ENCODE measurements at regions of chr9 and their contacts with region 1.

Region 1: DNA sequence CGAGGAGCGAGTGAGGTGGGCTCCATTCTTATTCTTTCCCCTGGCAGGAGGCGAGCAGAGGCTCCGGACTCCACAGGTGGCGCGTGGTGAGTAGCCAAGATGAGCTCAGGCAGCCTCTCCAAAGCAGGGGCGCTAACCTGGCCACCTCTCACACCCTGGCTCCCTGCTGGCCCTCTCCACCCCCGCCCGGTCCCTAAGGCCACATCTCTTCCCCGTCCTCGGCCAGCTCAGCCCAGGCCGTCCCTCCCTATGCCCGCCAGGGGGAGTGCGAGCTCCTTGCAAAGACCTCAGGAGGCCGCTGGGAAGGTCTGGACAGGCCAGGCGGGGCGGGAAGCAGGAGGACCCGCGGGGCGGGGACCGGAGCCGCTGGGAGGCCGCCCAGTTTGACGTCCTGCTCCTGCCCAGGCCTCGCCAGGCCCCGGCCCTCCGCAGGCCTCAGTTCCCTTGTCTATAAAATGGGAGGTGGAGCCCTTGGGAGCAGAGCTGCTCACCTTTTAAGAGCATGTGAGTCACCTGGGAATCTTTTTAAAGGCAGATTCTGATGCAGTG is 46.3 kb upstream of the GGTA1 start:
- DNase-seq: peak; percentile 97
- H3K4me3 Mint-ChIP-seq: peak overlapping the region; percentile 33
- H3K27ac Mint-ChIP-seq: peak overlapping the region; percentile 19
- H3K4me1 Mint-ChIP-seq: no peaks in the 10 kb centered on the region
- H3K27me3 Mint-ChIP-seq: no peaks in the 10 kb centered on the region
- CTCF ChIP-seq: peak; percentile 96

Region 2: DNA sequence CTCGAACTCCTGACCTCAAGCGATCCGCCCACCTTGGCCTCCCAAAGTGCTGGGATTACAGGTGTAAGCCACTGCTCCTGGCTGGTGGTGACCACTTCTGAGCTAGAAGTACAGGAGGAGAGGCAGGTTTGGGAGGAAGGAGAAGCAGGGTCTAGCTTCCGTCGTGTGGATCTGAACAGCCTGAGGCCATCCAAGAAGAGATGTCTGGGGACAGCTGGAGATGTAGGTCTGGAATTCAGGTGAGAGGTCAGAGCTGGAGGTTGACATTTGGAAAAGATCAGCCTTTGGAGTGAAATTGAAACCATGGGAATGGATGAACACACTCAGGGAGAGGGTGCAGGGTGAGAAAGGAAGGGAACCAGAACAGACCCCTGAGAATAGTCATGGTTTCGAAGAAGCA is 13.1 kb before region 1 on chr9:
- CTCF ChIA-PET with region 1: interaction called, 32 read pairs
- POLR2A ChIA-PET with region 1: no interaction called
- intact Hi-C with region 1: no loop called
- DNase-seq: no peak
- H3K4me3 Mint-ChIP-seq: no peak overlapping the region
- H3K27ac Mint-ChIP-seq: no peak overlapping the region
- H3K4me1 Mint-ChIP-seq: peaks cover 8% of the 10 kb centered on the region
- H3K27me3 Mint-ChIP-seq: peaks cover 12% of the 10 kb centered on the region
- CTCF ChIP-seq: no peak

Region 3: DNA sequence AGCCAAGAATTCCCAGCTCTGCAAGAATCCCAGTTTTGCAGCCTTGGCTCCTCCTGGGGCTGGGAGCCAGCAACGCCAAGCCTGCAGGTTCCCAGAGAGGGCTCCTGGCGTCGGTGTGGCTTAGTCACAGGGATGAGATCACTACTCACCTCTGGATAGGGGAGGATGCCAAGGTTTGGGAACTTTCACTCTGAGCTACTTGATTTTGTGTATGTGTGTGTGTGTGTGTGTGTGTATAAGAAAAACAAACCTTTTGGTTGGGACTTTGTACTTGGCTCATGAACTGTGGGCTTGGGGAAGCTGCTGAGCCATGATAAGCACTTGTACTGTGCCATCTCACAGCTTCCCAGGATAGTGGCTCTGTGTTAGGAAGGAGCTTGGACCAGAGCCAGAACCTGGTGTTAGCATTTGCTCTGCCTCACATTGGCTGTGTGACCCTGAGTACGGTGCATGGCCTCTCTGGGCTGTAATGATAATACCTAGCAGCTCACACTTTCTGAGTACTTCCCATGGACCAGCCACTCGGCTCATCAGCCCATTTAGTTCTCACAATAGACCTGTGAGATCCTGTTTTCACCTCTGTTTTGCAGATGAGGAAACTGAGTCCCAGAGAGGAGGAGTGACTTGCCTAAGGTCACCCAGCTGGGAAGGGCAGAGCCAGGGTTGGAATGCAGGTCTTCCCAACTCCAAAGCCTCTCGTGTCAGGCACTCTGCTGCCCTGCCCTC is 64.1 kb after region 1 on chr9:
- CTCF ChIA-PET with region 1: interaction called, 12 read pairs
- POLR2A ChIA-PET with region 1: interaction called, 5 read pairs
- intact Hi-C with region 1: loop called (anchors 10 kb)
- DNase-seq: peak; percentile 97
- H3K4me3 Mint-ChIP-seq: no peak overlapping the region
- H3K27ac Mint-ChIP-seq: peak overlapping the region; percentile 51
- H3K4me1 Mint-ChIP-seq: peaks cover 25% of the 10 kb centered on the region
- H3K27me3 Mint-ChIP-seq: no peaks in the 10 kb centered on the region
- CTCF ChIP-seq: no peak

Region 4: GRCh38 chr9:121698627-121699570 is 152.9 kb after region 1 on chr9:
- CTCF ChIA-PET with region 1: interaction called, 28 read pairs
- POLR2A ChIA-PET with region 1: interaction called, 3 read pairs
- intact Hi-C with region 1: loop called (anchors 2 kb)
- DNase-seq: peak; percentile 47
- H3K4me3 Mint-ChIP-seq: peak overlapping the region; percentile 75
- H3K27ac Mint-ChIP-seq: no peak overlapping the region
- H3K4me1 Mint-ChIP-seq: peaks cover 20% of the 10 kb centered on the region
- H3K27me3 Mint-ChIP-seq: no peaks in the 10 kb centered on the region
- CTCF ChIP-seq: no peak

Region 5: GRCh38 chr9:121744002-121744686 is 198.2 kb after region 1 on chr9:
- CTCF ChIA-PET with region 1: interaction called, 5 read pairs
- POLR2A ChIA-PET with region 1: no interaction called
- intact Hi-C with region 1: loop called (anchors 1 kb)
- DNase-seq: peak; percentile 40
- H3K4me3 Mint-ChIP-seq: no peak overlapping the region
- H3K27ac Mint-ChIP-seq: no peak overlapping the region
- H3K4me1 Mint-ChIP-seq: peaks cover 14% of the 10 kb centered on the region
- H3K27me3 Mint-ChIP-seq: no peaks in the 10 kb centered on the region
- CTCF ChIP-seq: no peak

Region 6: GRCh38 chr9:121765021-121765950 is 219.3 kb after region 1 on chr9:
- CTCF ChIA-PET with region 1: no interaction called
- POLR2A ChIA-PET with region 1: no interaction called
- intact Hi-C with region 1: no loop called
- DNase-seq: peak; percentile 25
- H3K4me3 Mint-ChIP-seq: no peak overlapping the region
- H3K27ac Mint-ChIP-seq: no peak overlapping the region
- H3K4me1 Mint-ChIP-seq: peaks cover 6% of the 10 kb centered on the region
- H3K27me3 Mint-ChIP-seq: no peaks in the 10 kb centered on the region
- CTCF ChIP-seq: no peak

Region 7: GRCh38 chr9:121997791-121998190 is 451.8 kb after region 1 on chr9:
- CTCF ChIA-PET with region 1: interaction called, 35 read pairs
- POLR2A ChIA-PET with region 1: interaction called, 3 read pairs
- intact Hi-C with region 1: loop called (anchors 1 kb)
- DNase-seq: no peak
- H3K4me3 Mint-ChIP-seq: no peak overlapping the region
- H3K27ac Mint-ChIP-seq: no peak overlapping the region
- H3K4me1 Mint-ChIP-seq: peaks cover 4% of the 10 kb centered on the region
- H3K27me3 Mint-ChIP-seq: no peaks in the 10 kb centered on the region
- CTCF ChIP-seq: no peak

Region 8: GRCh38 chr9:122125158-122125508 is 579.2 kb after region 1 on chr9:
- CTCF ChIA-PET with region 1: interaction called, 14 read pairs
- POLR2A ChIA-PET with region 1: interaction called, 3 read pairs
- intact Hi-C with region 1: loop called (anchors 2 kb)
- DNase-seq: peak; percentile 79
- H3K4me3 Mint-ChIP-seq: no peak overlapping the region
- H3K27ac Mint-ChIP-seq: no peak overlapping the region
- H3K4me1 Mint-ChIP-seq: peaks cover 18% of the 10 kb centered on the region
- H3K27me3 Mint-ChIP-seq: peaks cover 11% of the 10 kb centered on the region
- CTCF ChIP-seq: peak; percentile 98

Measured in MCF 10A (cell line).